ENCODE measurements at regions of chr6 and their contacts with region 1.

Region 1: DNA sequence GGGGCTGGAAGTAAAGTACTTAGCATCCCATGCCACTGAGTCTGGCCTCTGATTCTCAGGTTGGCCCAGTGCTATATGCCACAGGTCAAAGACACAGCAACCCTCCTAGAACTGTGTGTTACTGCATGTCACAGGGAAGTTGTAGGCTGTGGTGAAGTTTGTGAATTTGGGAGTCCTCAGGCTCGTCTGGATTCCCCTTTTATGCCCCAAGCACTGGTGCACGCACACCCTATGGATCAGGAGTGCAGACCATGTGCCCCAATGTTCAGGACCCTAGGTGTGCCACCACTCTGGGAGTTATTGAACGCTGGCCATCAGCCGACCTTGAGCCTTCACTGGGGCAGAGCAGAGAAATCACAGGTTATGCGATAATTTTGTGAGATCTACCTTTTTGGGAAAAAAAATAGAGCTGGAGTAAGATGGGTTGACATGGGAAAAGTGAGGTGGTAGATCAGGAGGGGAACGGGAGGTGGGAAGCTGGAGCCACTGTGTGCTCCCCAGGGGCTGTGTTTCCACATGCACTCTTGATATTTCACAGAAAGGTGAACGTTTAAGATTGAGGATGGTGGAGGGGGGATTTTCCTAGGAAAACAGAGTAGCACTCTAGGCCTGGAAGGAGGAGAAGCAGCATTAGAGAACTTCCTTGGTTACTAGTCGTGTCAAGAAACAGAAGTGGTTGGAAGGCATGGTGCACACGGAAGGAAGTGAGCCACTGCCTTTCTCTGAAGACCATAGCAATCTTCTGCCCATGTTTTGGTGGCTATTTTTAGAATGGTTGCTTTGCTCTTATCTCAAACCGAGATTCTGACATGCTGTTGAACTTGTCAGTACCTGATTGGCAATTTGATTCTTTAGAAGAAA is 44.1 kb downstream of the DUSP22 start:
- DNase-seq: peak; percentile 56
- ATAC-seq: peak; percentile 35
- H3K4me3 Mint-ChIP-seq: peak overlapping the region; percentile 65
- H3K27ac Mint-ChIP-seq: peak overlapping the region; percentile 89
- H3K4me1 Mint-ChIP-seq: peaks cover 60% of the 10 kb centered on the region
- H3K27me3 Mint-ChIP-seq: no peaks in the 10 kb centered on the region

Region 2: DNA sequence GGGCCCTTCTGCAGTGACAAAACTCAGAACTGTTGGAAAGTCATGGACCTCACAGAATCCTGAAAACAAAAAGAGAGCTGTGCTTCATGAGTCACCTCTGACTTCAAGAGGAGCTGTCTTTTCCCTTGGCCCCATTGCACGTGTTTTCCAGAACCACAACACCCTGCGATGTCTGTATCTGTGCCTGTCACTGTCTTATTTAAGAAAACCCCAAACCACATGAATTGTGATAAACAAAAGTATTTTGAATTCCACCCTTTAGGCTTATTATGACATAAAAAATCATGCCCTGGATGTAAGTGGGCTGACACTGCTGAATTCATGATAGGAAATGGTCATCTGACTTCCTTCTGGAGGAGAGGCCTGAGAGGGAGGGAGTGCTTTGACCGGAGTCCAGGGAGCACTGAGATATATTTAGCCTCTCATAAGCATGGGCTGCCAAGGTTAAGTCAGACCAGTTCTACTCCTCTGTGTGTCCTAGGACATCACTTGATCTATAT is 140.5 kb before region 1 on chr6:
- CTCF ChIA-PET with region 1: interaction called, 12 read pairs
- POLR2A ChIA-PET with region 1: interaction called, 3 read pairs
- DNase-seq: peak; percentile 52
- ATAC-seq: peak; percentile 66
- H3K4me3 Mint-ChIP-seq: no peak overlapping the region
- H3K27ac Mint-ChIP-seq: no peak overlapping the region
- H3K4me1 Mint-ChIP-seq: peaks cover 42% of the 10 kb centered on the region
- H3K27me3 Mint-ChIP-seq: no peaks in the 10 kb centered on the region

Region 3: DNA sequence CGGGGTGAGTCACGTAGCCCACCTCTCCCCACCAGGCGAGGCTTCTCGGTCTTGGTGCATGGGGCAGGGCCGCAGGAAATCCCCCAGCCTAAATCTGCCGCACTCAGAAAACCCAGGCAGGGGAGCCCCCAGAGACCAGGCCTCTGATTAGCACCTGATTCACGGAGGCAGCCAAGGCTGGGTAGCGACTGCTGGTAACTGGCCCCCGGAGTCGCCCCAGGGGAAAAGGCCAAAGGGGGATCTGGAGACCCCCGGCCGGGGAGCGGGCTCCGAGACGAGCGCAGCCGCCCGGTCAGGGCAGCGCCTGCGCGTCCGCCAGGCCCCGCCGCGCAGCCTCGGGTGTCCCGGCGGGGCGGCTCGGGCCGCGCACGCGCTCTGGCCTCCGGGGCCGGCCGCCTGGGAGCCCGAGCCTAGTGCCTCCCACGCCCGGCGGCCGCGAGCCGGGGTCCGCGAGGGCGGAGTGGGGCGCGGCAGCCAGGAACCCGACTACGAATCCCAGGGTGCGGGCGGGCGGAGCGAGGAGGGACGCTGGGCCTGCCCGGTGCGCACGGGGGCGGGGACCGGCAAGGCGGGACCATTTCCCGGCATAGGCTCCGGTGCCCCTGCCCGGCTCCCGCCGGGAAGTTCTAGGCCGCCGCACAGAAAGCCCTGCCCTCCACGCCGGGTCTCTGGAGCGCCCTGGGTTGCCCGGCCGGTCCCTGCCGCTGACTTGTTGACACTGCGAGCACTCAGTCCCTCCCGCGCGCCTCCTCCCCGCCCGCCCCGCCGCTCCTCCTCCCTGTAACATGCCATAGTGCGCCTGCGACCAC is 44.5 kb before region 1 on chr6 and contains the start of gene DUSP22:
- CTCF ChIA-PET with region 1: interaction called, 8 read pairs
- POLR2A ChIA-PET with region 1: interaction called, 10 read pairs
- DNase-seq: peak; percentile 90
- ATAC-seq: peak; percentile 75
- H3K4me3 Mint-ChIP-seq: peak within 1 kb of the TSS; percentile 86
- H3K27ac Mint-ChIP-seq: peak within 1 kb of the TSS; percentile 97
- H3K4me1 Mint-ChIP-seq: peaks cover 67% of the 10 kb centered on the region
- H3K27me3 Mint-ChIP-seq: no peaks in the 10 kb centered on the region
- total RNA-seq, gene DUSP22: 32.6 to 33.2 TPM

Region 4: GRCh38 chr6:322259-322930 is 14.0 kb before region 1 on chr6:
- CTCF ChIA-PET with region 1: interaction called, 14 read pairs
- POLR2A ChIA-PET with region 1: interaction called, 4 read pairs
- DNase-seq: no peak
- ATAC-seq: no peak
- H3K4me3 Mint-ChIP-seq: no peak overlapping the region
- H3K27ac Mint-ChIP-seq: no peak overlapping the region
- H3K4me1 Mint-ChIP-seq: peaks cover 10% of the 10 kb centered on the region
- H3K27me3 Mint-ChIP-seq: no peaks in the 10 kb centered on the region

Measured in activated CD8-positive, alpha-beta T cell treated with anti-CD3 and anti-CD28 coated beads, Interleukin-2, amount 10 ng/mL, durations not matched to agents 7 days and 5 days (primary cell).